ENCODE measurements at regions of chr4 and their contacts with region 1.

Region 1: GRCh38 chr4:53196882-53197771 is 168.7 kb downstream of the SCFD2 start:
- DNase-seq: no peak
- H3K4me3 ChIP-seq: no peak overlapping the region
- H3K27ac ChIP-seq: no peak overlapping the region
- H3K4me1 ChIP-seq: no peaks in the 10 kb centered on the region
- H3K27me3 ChIP-seq: no peaks in the 10 kb centered on the region
- CTCF ChIP-seq: peak; percentile 74

Region 2: DNA sequence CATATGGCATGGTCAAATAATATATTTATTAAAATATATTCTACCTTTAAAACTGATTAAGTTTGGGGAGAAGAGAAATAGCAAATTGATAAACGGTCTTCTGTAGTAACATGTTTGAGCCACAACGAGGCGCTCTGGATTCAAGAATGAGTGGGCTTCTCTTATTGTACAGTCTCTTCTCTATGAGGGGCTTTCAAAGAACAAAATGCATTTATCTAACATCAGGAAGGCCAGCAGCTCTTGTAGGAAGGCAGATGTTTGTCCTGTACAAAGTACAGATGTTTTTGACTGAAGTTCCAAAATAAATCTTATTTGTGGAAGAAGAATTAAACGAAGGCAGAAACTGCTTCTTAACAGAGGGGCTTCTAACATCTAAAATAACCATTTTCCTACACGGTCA is 181.4 kb before region 1 on chr4:
- intact Hi-C with region 1: loop called (anchors 10 kb)
- DNase-seq: peak; percentile 29
- H3K4me3 ChIP-seq: no peak overlapping the region
- H3K27ac ChIP-seq: no peak overlapping the region
- H3K4me1 ChIP-seq: no peaks in the 10 kb centered on the region
- H3K27me3 ChIP-seq: no peaks in the 10 kb centered on the region
- CTCF ChIP-seq: peak; percentile 64

Region 3: DNA sequence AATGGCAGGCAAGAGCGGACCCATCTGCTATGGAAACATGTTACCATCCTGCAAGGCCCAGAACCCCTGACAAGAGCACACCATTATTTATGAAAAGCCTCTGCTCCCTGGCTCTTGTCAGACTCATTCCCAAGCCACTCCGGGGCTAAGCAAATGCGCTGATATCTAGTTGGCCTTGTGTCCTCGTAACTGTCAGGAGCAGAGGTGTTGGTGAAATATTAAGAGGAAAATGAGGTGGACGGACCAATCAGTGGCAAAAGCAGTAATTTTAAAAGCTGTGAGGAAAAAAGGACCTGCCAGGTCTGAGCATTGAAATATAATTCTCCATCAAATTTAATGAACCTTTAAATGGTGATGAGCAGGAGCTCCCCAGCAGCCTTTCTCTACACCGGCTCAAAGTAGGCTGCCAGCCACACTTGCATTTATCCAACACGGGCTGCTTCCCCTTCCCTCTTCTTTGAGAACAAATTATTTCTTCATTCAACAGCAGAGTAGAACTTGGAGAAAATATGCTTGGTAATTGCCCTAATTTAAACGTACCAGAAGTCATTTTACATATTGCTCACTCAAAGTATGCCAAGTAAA is 120.7 kb before region 1 on chr4:
- intact Hi-C with region 1: no loop called
- DNase-seq: no peak
- H3K4me3 ChIP-seq: no peak overlapping the region
- H3K27ac ChIP-seq: no peak overlapping the region
- H3K4me1 ChIP-seq: no peaks in the 10 kb centered on the region
- H3K27me3 ChIP-seq: no peaks in the 10 kb centered on the region
- CTCF ChIP-seq: no peak

Region 4: DNA sequence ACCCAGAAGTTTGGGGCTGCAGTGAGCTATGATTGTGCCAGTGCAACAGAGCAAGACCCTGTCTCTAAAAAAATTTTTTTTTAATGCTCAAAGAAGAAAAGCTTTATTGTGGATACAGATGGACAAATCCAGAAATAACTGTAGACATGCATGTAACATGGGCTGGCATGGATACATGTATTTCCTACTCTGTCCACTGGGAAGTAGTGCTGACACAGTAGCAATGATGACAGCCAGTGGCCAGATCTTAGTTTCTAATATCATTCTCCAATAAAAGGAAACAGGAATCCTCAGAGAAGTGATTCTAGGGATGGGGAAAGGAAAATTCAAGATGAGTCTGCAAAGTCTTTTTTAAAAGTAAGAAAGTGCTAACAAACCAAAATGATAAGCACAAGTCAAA is 48.2 kb before region 1 on chr4:
- intact Hi-C with region 1: no loop called
- DNase-seq: no peak
- H3K4me3 ChIP-seq: no peak overlapping the region
- H3K27ac ChIP-seq: no peak overlapping the region
- H3K4me1 ChIP-seq: no peaks in the 10 kb centered on the region
- H3K27me3 ChIP-seq: no peaks in the 10 kb centered on the region
- CTCF ChIP-seq: no peak

Region 5: GRCh38 chr4:53929955-53930798 is 733.0 kb after region 1 on chr4:
- intact Hi-C with region 1: loop called (anchors 10 kb)
- DNase-seq: peak; percentile 71
- H3K4me3 ChIP-seq: no peak overlapping the region
- H3K27ac ChIP-seq: no peak overlapping the region
- H3K4me1 ChIP-seq: no peaks in the 10 kb centered on the region
- H3K27me3 ChIP-seq: no peaks in the 10 kb centered on the region
- CTCF ChIP-seq: peak; percentile 66

Measured in colonic mucosa (tissue), 4 donors.